OCI-LY7 (cell line): ENCODE measurements at regions of chr7 and their contacts with region 1.

Region 1: DNA sequence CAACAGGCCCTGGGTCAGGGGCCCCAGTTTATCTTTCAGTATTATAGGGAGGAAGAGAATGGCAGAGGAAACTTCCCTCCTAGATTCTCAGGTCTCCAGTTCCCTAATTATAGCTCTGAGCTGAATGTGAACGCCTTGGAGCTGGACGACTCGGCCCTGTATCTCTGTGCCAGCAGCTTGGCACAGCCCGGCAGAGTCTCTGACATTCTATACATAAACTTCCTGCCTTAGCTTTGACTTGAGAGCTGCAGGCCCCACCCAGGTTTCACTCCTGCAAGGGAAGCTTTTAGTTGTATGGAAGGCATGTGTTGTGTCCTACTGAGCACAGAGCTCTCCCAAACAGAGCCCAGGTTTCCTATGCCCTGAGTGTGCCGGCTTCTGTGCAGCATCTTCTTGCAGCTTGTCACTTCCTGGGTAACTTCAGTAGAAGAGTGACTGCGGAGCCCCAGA is 205.6 kb upstream of the PRSS58 start:
- DNase-seq: no peak
- H3K4me3 ChIP-seq: no peak overlapping the region
- H3K27ac ChIP-seq: no peak overlapping the region
- H3K4me1 ChIP-seq: peaks cover 5% of the 10 kb centered on the region
- CTCF ChIP-seq: no peak

Region 2: GRCh38 chr7:142063551-142064442 is 399.6 kb before region 1 on chr7:
- CTCF ChIA-PET with region 1: no interaction called
- POLR2A ChIA-PET with region 1: no interaction called
- intact Hi-C with region 1: no loop called
- DNase-seq: no peak
- H3K4me3 ChIP-seq: no peak overlapping the region
- H3K27ac ChIP-seq: no peak overlapping the region
- H3K4me1 ChIP-seq: no peaks in the 10 kb centered on the region
- CTCF ChIP-seq: no peak

Region 3: GRCh38 chr7:142519083-142520078 is 56.0 kb after region 1 on chr7:
- CTCF ChIA-PET with region 1: interaction called, 3 read pairs
- POLR2A ChIA-PET with region 1: interaction called, 3 read pairs
- intact Hi-C with region 1: loop called (anchors 5 kb)
- DNase-seq: no peak
- H3K4me3 ChIP-seq: no peak overlapping the region
- H3K27ac ChIP-seq: no peak overlapping the region
- H3K4me1 ChIP-seq: no peaks in the 10 kb centered on the region
- CTCF ChIP-seq: peak; percentile 10; the same call in 1 of the 2 replicates